ENCODE measurements at regions of chr4 and their contacts with region 1.

Region 1: DNA sequence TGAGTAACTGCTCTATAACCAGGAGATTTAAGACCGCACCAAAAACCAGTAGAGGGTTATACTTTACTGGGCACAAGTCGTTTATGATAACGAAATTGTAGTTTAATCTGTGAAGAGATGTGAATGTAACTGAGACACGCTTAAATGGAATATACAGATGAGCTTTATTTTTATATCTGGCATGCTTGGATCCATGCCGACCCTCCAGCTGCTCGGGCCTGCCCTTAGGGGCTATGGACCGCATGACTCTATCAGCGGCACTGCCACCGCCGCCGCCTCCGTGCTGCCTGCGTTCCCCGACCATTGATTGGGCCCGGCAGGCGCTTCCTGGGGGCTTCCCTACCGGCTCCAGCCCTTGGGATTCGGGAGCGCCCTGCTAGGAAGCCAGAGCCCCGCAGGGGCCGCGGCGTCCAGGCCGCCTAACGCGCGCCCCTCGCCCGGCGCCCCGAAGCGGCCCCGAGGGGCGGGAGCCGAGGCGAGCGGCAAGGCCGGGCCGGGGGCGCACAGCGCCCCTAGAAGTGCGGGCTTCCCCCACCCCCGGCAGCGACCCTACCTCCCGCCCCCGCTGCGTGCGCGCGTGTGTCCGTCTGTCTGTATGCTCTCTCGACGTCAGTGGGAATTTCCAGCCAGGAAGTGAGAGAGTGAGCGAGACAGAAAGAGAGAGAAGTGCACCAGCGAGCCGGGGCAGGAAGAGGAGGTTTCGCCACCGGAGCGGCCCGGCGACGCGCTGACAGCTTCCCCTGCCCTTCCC is at the start of gene NFKB1:
- DNase-seq: peak; percentile 56 to 97 (median 68)
- ATAC-seq: peak; percentile 65
- H3K4me3 ChIP-seq: peak within 1 kb of the TSS; percentile 96
- H3K4me3 Mint-ChIP-seq: peak within 1 kb of the TSS; percentile 98
- H3K27ac ChIP-seq: peak within 1 kb of the TSS; percentile 99 to 100
- H3K27ac Mint-ChIP-seq: peak within 1 kb of the TSS; percentile 94
- H3K4me1 ChIP-seq: peaks cover 11% of the 10 kb centered on the region
- H3K4me1 Mint-ChIP-seq: peaks cover 42% of the 10 kb centered on the region
- H3K27me3 ChIP-seq: no peaks in the 10 kb centered on the region
- H3K27me3 Mint-ChIP-seq: no peaks in the 10 kb centered on the region
- CTCF ChIP-seq: no peak
- total RNA-seq, gene NFKB1: 134 TPM

Region 2: GRCh38 chr4:102449751-102450352 is 51.0 kb before region 1 on chr4:
- CTCF ChIA-PET with region 1: no interaction called
- POLR2A ChIA-PET with region 1: no interaction called
- intact Hi-C with region 1: loop called in 1 of 2 experiments (anchors 5 kb)
- DNase-seq: peak in 13 of 14 experiments; percentile 14 to 84 (median 36)
- ATAC-seq: peak; percentile 78
- H3K4me3 ChIP-seq: no peak overlapping the region
- H3K4me3 Mint-ChIP-seq: no peak overlapping the region
- H3K27ac ChIP-seq: no peak overlapping the region
- H3K27ac Mint-ChIP-seq: no peak overlapping the region
- H3K4me1 ChIP-seq: no peaks in the 10 kb centered on the region
- H3K4me1 Mint-ChIP-seq: peaks cover 12% of the 10 kb centered on the region
- H3K27me3 ChIP-seq: no peaks in the 10 kb centered on the region
- H3K27me3 Mint-ChIP-seq: no peaks in the 10 kb centered on the region
- CTCF ChIP-seq: peak; percentile 87

Region 3: GRCh38 chr4:102518703-102519131 is 17.8 kb after region 1 on chr4:
- CTCF ChIA-PET with region 1: interaction called, 3 read pairs
- POLR2A ChIA-PET with region 1: interaction called, 6 read pairs
- intact Hi-C with region 1: loop called in 1 of 2 experiments (anchors 1 kb)
- DNase-seq: peak in 6 of 14 experiments; percentile 2 to 80 (median 39)
- ATAC-seq: peak; percentile 83
- H3K4me3 ChIP-seq: no peak overlapping the region
- H3K4me3 Mint-ChIP-seq: peak overlapping the region; percentile 43
- H3K27ac ChIP-seq: peak overlapping the region in 1 of 2 donors; percentile 35
- H3K27ac Mint-ChIP-seq: peak overlapping the region; percentile 80
- H3K4me1 ChIP-seq: peaks cover 18% of the 10 kb centered on the region
- H3K4me1 Mint-ChIP-seq: peaks cover 84% of the 10 kb centered on the region
- H3K27me3 ChIP-seq: no peaks in the 10 kb centered on the region
- H3K27me3 Mint-ChIP-seq: no peaks in the 10 kb centered on the region
- CTCF ChIP-seq: no peak

Region 4: DNA sequence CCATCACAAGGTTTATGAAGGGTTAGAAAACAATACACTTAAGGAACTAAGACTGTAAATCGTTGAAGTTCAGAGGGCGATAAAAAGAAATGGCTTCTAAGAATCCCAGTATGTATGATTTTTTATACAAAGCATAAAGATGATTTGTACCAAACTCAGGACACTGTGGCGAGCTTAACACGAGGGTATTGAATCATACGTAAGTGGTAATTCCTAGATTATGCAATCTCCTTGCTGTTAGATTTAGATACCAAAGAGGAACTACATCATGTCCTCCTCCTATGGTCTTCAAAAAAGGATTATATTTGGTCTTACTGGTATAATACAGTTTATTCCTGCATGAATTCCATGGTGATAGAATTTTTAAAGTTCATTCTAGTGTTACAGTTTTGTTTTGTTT is 24.2 kb after region 1 on chr4:
- CTCF ChIA-PET with region 1: interaction called, 3 read pairs
- POLR2A ChIA-PET with region 1: interaction called, 34 read pairs
- intact Hi-C with region 1: no loop called
- DNase-seq: peak in 2 of 14 experiments; percentile 59 to 67
- ATAC-seq: no peak
- H3K4me3 ChIP-seq: no peak overlapping the region
- H3K4me3 Mint-ChIP-seq: peak overlapping the region; percentile 30
- H3K27ac ChIP-seq: no peak overlapping the region
- H3K27ac Mint-ChIP-seq: peak overlapping the region; percentile 58
- H3K4me1 ChIP-seq: peaks cover 23% of the 10 kb centered on the region
- H3K4me1 Mint-ChIP-seq: peaks cover 99% of the 10 kb centered on the region
- H3K27me3 ChIP-seq: no peaks in the 10 kb centered on the region
- H3K27me3 Mint-ChIP-seq: no peaks in the 10 kb centered on the region
- CTCF ChIP-seq: no peak

Region 5: DNA sequence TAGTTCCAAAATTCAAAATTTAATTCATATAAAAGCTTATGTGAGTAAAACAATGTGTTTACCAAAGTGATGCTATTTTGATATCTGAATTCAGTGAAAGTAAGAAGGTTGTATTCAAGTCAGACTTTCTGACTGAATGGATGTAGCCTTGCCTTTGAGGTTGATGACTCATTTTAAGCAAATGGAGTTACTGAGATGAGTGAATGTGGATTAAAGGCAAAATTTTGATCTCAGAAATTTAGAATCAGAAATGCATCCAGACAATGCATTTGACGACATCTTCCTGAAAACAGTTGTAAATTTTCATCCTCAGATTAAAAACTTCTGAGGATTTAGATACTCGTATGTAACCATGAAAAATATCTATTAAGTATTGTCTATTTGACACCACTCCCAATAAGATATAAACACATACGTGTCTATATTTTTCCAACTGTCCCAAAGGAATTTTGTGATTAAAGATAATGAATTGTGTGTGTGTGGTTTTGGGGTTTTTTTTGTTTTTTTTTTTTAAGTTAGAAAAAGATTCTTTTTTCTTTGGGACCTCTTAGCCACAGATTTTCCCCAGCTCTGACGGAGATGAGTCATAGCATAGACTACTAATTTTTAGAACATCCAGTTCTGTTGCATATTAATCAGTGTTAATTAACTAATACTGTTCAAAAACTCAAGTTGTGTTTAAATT is 34.7 kb after region 1 on chr4:
- CTCF ChIA-PET with region 1: no interaction called
- POLR2A ChIA-PET with region 1: interaction called, 10 read pairs
- intact Hi-C with region 1: loop called in 1 of 2 experiments (anchors 5 kb)
- DNase-seq: peak in 2 of 14 experiments; percentile 41 to 51
- ATAC-seq: peak; percentile 69
- H3K4me3 ChIP-seq: no peak overlapping the region
- H3K4me3 Mint-ChIP-seq: no peak overlapping the region
- H3K27ac ChIP-seq: no peak overlapping the region
- H3K27ac Mint-ChIP-seq: peak overlapping the region; percentile 59
- H3K4me1 ChIP-seq: peaks cover 3% of the 10 kb centered on the region
- H3K4me1 Mint-ChIP-seq: peaks cover 70% of the 10 kb centered on the region
- H3K27me3 ChIP-seq: no peaks in the 10 kb centered on the region
- H3K27me3 Mint-ChIP-seq: no peaks in the 10 kb centered on the region
- CTCF ChIP-seq: no peak

Region 6: DNA sequence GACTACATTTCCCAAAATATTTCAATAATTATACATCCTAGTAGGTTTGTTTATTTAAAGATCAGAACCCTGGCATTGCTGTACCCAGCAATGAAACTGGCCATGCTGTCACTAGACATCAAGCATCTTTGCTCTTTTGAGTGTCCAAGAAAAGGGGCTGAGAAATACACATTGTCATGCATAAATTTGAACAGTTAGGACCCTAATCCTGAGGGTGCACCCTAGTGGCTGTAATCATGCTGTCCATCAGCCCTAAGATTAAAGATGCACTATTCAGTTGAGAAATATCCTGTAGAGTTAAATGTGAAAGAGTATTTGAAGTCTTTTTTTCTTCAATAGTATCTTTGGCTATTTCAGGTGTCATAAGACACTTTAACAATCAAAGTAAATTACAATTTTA is 109.1 kb after region 1 on chr4:
- CTCF ChIA-PET with region 1: interaction called, 5 read pairs
- POLR2A ChIA-PET with region 1: interaction called, 12 read pairs
- intact Hi-C with region 1: loop called in 1 of 2 experiments (anchors 5 kb)
- DNase-seq: no peak
- ATAC-seq: no peak
- H3K4me3 ChIP-seq: no peak overlapping the region
- H3K4me3 Mint-ChIP-seq: no peak overlapping the region
- H3K27ac ChIP-seq: no peak overlapping the region
- H3K27ac Mint-ChIP-seq: no peak overlapping the region
- H3K4me1 ChIP-seq: peaks cover 42% of the 10 kb centered on the region
- H3K4me1 Mint-ChIP-seq: peaks cover 74% of the 10 kb centered on the region
- H3K27me3 ChIP-seq: no peaks in the 10 kb centered on the region
- H3K27me3 Mint-ChIP-seq: no peaks in the 10 kb centered on the region
- CTCF ChIP-seq: no peak

Region 7: DNA sequence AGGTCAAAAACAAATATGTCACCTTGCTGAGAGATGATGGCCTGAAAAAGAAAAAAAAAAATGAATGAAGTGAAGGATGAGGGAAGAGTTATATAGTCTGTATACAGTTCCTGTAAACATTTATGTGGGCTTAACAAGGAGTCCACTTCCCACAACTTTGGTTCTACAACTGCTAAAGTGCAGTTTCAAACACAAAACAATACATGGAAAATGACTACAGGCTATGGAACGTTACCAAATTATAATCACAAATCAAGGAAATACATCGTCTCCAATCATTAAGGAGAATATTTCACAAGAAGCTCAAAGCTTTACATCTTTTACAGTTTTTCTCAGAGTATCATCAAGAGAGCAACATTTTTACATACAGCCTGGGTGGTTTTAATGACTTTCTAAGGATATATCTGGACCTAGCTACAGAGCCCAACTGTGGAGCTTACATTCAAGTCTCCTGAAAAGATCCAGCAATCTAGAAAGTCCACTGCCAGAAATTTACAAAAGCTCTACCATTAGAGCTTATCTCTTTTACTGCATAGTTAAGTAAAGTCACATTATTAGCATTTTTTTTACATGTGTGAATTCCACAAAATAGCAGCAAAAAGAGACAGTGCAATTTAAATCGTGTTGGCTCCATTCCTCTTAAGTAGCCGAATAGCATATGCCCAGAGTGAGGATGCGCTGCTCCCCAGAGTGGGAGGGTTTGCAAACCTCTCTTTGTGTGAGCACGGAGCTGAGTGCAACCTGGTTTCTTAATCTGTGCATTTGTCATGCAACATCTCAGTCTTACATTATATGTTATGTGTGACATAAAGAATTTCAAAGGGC is 131.6 kb after region 1 on chr4:
- CTCF ChIA-PET with region 1: no interaction called
- POLR2A ChIA-PET with region 1: interaction called, 11 read pairs
- intact Hi-C with region 1: no loop called
- DNase-seq: no peak
- ATAC-seq: no peak
- H3K4me3 ChIP-seq: no peak overlapping the region
- H3K4me3 Mint-ChIP-seq: no peak overlapping the region
- H3K27ac ChIP-seq: no peak overlapping the region
- H3K27ac Mint-ChIP-seq: peak overlapping the region; percentile 94
- H3K4me1 ChIP-seq: peaks cover 20% of the 10 kb centered on the region
- H3K4me1 Mint-ChIP-seq: peaks cover 53% of the 10 kb centered on the region
- H3K27me3 ChIP-seq: no peaks in the 10 kb centered on the region
- H3K27me3 Mint-ChIP-seq: no peaks in the 10 kb centered on the region
- CTCF ChIP-seq: no peak

Region 8: DNA sequence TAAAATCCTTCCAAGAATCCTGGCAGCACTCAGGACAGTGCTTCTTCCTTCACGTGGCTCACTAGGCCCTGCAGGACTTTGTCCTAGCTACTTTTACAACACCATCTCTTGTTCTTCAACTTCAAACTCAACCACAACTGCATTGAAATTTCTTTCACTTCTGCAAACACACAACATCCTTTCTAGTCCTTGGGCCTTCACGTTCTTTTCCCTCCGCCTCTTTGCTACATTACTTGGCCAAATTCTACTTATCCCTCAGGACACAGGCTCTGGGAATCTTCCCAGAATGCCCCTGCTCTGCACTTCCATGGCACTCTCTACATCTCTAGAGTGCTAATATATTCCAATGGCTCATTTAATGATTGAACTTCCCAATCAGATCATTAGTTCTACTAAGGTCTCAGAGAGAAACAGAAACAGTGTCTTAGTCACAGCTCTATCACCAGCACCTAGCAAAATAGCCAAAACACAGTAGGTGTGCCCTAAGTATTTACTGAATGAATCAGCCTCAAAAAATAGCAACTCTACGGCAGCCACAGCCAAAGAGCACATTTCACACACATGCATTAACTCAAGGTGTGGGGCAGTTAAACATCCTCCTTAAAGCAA is 186.6 kb after region 1 on chr4:
- CTCF ChIA-PET with region 1: no interaction called
- POLR2A ChIA-PET with region 1: no interaction called
- intact Hi-C with region 1: no loop called
- DNase-seq: no peak
- ATAC-seq: no peak
- H3K4me3 ChIP-seq: no peak overlapping the region
- H3K4me3 Mint-ChIP-seq: no peak overlapping the region
- H3K27ac ChIP-seq: no peak overlapping the region
- H3K27ac Mint-ChIP-seq: no peak overlapping the region
- H3K4me1 ChIP-seq: no peaks in the 10 kb centered on the region
- H3K4me1 Mint-ChIP-seq: no peaks in the 10 kb centered on the region
- H3K27me3 ChIP-seq: no peaks in the 10 kb centered on the region
- H3K27me3 Mint-ChIP-seq: no peaks in the 10 kb centered on the region
- CTCF ChIP-seq: no peak

Measured in CD4-positive, alpha-beta T cell (primary cell).